ENCODE measurements at regions of chr3 and their contacts with region 1.

Region 1: GRCh38 chr3:18988614-18989229 is 159.6 kb upstream of the KCNH8 start:
- DNase-seq: peak in 2 of 9 experiments; percentile 40 to 61
- ATAC-seq: peak; percentile 61
- H3K4me3 ChIP-seq: no peak overlapping the region
- H3K4me3 Mint-ChIP-seq: peak overlapping the region; percentile 7
- H3K27ac ChIP-seq: no peak overlapping the region
- H3K27ac Mint-ChIP-seq: no peak overlapping the region
- H3K4me1 ChIP-seq: peaks cover 3% of the 10 kb centered on the region
- H3K4me1 Mint-ChIP-seq: peaks cover 14% of the 10 kb centered on the region
- H3K27me3 ChIP-seq: peaks cover 0 to 3% of the 10 kb centered on the region in 2 experiments
- H3K27me3 Mint-ChIP-seq: peaks cover 9% of the 10 kb centered on the region
- CTCF ChIP-seq: peak; percentile 91

Region 2: DNA sequence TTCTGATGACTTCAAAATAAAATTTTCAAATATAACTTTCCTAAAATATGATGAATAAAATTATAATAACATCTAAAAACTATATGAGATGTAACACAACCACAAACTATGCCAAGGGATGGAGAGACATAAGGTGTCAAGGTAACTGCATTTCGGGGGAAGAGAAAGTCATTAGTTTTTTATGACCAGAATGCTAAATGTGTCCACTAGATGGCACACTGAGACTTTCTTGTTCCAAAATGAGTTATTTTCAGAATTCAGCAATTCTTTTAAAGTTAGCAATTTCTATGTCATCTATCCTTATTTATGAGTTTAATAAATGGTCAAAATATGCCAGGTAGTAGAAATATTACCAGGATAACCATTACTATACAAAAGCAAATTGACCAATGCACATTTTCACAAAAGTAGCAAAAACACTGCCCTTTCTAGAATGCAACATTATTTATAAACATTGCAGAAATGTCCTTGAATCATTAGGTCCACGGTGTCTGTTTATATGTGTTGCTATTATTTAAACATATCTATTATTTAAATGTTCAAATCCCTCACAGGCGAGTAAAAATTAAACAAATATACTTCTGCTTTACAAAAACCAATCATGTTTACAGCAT is 1729.8 kb before region 1 on chr3:
- CTCF ChIA-PET with region 1: no interaction called
- POLR2A ChIA-PET with region 1: no interaction called
- intact Hi-C with region 1: loop called (anchors 1 to 2 kb)
- DNase-seq: peak in 3 of 9 experiments; percentile 15 to 67 (median 58)
- ATAC-seq: no peak
- H3K4me3 ChIP-seq: no peak overlapping the region
- H3K4me3 Mint-ChIP-seq: no peak overlapping the region
- H3K27ac ChIP-seq: no peak overlapping the region
- H3K27ac Mint-ChIP-seq: no peak overlapping the region
- H3K4me1 ChIP-seq: no peaks in the 10 kb centered on the region
- H3K4me1 Mint-ChIP-seq: peaks cover 2% of the 10 kb centered on the region
- H3K27me3 ChIP-seq: no peaks in the 10 kb centered on the region
- H3K27me3 Mint-ChIP-seq: no peaks in the 10 kb centered on the region
- CTCF ChIP-seq: peak; percentile 81

Region 3: DNA sequence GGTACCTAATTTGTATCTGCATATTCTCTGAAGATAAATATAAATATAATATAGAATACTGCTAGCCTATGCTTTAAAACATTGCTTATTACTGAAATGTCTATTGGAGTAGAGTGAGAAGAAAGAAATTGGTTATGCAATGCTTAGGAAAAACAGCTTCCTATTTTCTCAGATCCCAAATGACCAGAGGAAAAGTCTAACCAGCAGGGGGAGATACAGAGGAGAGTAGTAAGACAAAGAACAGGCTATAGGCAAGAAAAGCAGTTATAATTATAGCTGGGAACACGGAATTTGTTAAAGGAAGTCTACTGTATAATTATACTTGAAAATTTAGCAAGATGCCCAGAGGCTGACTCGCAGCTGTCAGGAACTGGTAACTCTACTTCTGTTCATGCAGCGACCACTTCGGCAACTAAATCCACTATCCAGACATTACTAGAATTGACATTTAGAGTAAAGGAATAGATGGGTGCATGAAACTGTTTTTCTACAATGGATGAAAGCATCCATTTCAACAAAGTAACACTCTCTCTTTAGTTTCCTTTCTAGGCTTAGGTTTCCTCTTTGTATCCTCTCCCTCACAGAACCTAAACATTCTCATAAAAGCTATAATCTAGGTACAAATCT is 1343.5 kb before region 1 on chr3:
- CTCF ChIA-PET with region 1: interaction called, 12 read pairs
- POLR2A ChIA-PET with region 1: no interaction called
- intact Hi-C with region 1: loop called in 1 of 2 experiments (anchors 2 kb)
- DNase-seq: peak in 2 of 9 experiments; percentile 39 to 51
- ATAC-seq: no peak
- H3K4me3 ChIP-seq: no peak overlapping the region
- H3K4me3 Mint-ChIP-seq: no peak overlapping the region
- H3K27ac ChIP-seq: no peak overlapping the region
- H3K27ac Mint-ChIP-seq: no peak overlapping the region
- H3K4me1 ChIP-seq: no peaks in the 10 kb centered on the region
- H3K4me1 Mint-ChIP-seq: peaks cover 5% of the 10 kb centered on the region
- H3K27me3 ChIP-seq: no peaks in the 10 kb centered on the region
- H3K27me3 Mint-ChIP-seq: no peaks in the 10 kb centered on the region
- CTCF ChIP-seq: peak; percentile 57

Region 4: DNA sequence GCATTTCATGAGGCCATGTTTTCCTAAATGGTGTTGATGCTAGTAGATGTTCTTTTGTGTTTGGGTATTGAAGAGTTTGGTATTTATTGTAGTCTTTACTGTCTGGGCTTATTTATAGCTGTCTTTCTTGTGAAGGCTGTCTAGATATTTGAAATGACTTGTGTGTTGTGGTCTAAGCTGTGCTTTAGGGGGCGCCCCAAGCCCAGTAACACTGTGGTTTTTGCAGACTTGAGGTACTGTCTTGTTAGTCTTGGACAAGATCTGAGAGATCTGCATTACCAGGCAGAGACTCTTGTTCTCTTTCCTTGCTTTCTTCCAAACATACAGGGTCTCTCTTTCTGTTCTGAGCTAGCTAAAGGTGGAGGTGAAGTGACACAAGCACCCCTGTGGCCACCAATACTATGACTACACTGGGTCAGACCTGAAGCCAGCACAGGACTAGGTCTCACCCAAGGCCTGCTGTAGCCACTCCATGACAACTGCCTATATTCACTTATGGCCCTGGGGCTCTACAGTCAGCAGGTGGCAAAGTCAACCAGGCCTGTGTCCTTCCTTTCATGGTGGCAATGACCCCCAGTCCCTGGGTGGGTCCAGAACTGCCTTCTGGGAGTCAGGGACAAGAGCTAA is 1094.2 kb before region 1 on chr3:
- CTCF ChIA-PET with region 1: interaction called, 18 read pairs
- POLR2A ChIA-PET with region 1: no interaction called
- intact Hi-C with region 1: loop called in 1 of 2 experiments (anchors 5 kb)
- DNase-seq: peak in 7 of 9 experiments; percentile 9 to 49 (median 33)
- ATAC-seq: no peak
- H3K4me3 ChIP-seq: no peak overlapping the region
- H3K4me3 Mint-ChIP-seq: no peak overlapping the region
- H3K27ac ChIP-seq: no peak overlapping the region
- H3K27ac Mint-ChIP-seq: no peak overlapping the region
- H3K4me1 ChIP-seq: no peaks in the 10 kb centered on the region
- H3K4me1 Mint-ChIP-seq: no peaks in the 10 kb centered on the region
- H3K27me3 ChIP-seq: no peaks in the 10 kb centered on the region
- H3K27me3 Mint-ChIP-seq: no peaks in the 10 kb centered on the region
- CTCF ChIP-seq: peak; percentile 17

Region 5: DNA sequence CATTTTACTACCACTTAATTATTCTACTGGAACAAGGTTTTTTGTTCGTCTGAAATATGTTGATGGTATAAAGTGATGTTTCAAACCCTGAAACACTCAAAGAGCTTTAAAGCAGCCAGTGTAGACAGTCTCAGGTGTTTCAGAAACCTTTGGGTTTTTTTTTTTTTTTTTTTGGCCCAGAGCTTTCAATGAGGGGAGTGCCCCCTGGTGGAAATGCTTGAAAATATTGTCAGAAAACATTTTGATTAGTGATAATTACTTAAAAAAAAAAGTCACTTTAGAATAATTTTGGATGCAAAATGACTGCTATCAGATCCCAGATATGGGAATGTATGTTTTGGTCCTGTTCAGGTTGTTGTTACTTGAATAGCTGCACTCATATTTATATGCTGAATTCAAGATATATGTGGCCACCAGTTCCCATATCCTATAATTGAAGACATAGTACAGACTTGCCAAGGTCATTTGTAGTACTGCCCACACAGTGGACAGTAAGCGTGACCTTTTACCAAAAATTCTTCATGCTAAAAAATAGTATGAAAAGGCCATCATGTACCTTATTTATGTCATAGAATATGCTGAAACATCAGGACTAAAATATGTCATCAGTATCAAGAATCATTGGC is 599.5 kb before region 1 on chr3:
- CTCF ChIA-PET with region 1: interaction called, 6 read pairs
- POLR2A ChIA-PET with region 1: no interaction called
- intact Hi-C with region 1: loop called (anchors 5 to 10 kb)
- DNase-seq: peak in 5 of 9 experiments; percentile 31 to 70 (median 38)
- ATAC-seq: peak; percentile 58
- H3K4me3 ChIP-seq: no peak overlapping the region
- H3K4me3 Mint-ChIP-seq: no peak overlapping the region
- H3K27ac ChIP-seq: no peak overlapping the region
- H3K27ac Mint-ChIP-seq: peak overlapping the region; percentile 57
- H3K4me1 ChIP-seq: peaks cover 68% of the 10 kb centered on the region
- H3K4me1 Mint-ChIP-seq: peaks cover 83% of the 10 kb centered on the region
- H3K27me3 ChIP-seq: no peaks in the 10 kb centered on the region
- H3K27me3 Mint-ChIP-seq: no peaks in the 10 kb centered on the region
- CTCF ChIP-seq: peak; percentile 91

Region 6: GRCh38 chr3:18758047-18758704 is 230.5 kb before region 1 on chr3:
- CTCF ChIA-PET with region 1: interaction called, 4 read pairs
- POLR2A ChIA-PET with region 1: no interaction called
- intact Hi-C with region 1: loop called in 1 of 2 experiments (anchors 2 kb)
- DNase-seq: peak in 6 of 9 experiments; percentile 12 to 91 (median 36)
- ATAC-seq: peak; percentile 97
- H3K4me3 ChIP-seq: no peak overlapping the region
- H3K4me3 Mint-ChIP-seq: no peak overlapping the region
- H3K27ac ChIP-seq: no peak overlapping the region
- H3K27ac Mint-ChIP-seq: peak overlapping the region; percentile 64
- H3K4me1 ChIP-seq: peaks cover 18% of the 10 kb centered on the region
- H3K4me1 Mint-ChIP-seq: peaks cover 44% of the 10 kb centered on the region
- H3K27me3 ChIP-seq: no peaks in the 10 kb centered on the region
- H3K27me3 Mint-ChIP-seq: no peaks in the 10 kb centered on the region
- CTCF ChIP-seq: peak; percentile 88

Region 7: GRCh38 chr3:19735111-19735510 is 746.4 kb after region 1 on chr3:
- CTCF ChIA-PET with region 1: no interaction called
- POLR2A ChIA-PET with region 1: no interaction called
- intact Hi-C with region 1: no loop called
- DNase-seq: no peak
- ATAC-seq: no peak
- H3K4me3 ChIP-seq: no peak overlapping the region
- H3K4me3 Mint-ChIP-seq: no peak overlapping the region
- H3K27ac ChIP-seq: no peak overlapping the region
- H3K27ac Mint-ChIP-seq: no peak overlapping the region
- H3K4me1 ChIP-seq: no peaks in the 10 kb centered on the region
- H3K4me1 Mint-ChIP-seq: no peaks in the 10 kb centered on the region
- H3K27me3 ChIP-seq: no peaks in the 10 kb centered on the region
- H3K27me3 Mint-ChIP-seq: no peaks in the 10 kb centered on the region
- CTCF ChIP-seq: no peak